AG04450 (cell line): ENCODE measurements at regions of chr6 and their contacts with region 1.

Region 1: DNA sequence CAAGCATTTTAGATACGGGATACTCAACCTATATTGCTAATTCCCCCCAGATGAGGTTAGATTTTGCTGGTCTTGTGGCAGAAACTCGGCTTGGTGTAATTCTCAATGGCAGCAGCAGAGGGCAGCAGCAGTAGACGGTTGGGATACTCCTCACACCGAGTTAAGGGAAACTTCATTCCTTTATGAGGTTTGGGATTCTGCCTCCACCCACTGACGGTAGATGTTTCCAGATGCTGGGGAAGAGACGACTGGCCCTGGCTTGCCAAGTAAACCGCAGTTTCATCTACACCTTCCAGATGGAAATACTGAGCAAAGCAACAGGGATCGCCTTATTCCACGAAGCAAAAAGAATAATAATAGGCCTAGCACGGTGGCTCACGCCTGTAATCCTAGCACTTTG is 8.2 kb upstream of the TBC1D7 start:
- DNase-seq: peak; percentile 87
- H3K4me3 ChIP-seq: no peak overlapping the region
- H3K27ac ChIP-seq: no peak overlapping the region
- H3K27me3 ChIP-seq: peaks cover 3% of the 10 kb centered on the region
- CTCF ChIP-seq: peak; percentile 91

Region 2: DNA sequence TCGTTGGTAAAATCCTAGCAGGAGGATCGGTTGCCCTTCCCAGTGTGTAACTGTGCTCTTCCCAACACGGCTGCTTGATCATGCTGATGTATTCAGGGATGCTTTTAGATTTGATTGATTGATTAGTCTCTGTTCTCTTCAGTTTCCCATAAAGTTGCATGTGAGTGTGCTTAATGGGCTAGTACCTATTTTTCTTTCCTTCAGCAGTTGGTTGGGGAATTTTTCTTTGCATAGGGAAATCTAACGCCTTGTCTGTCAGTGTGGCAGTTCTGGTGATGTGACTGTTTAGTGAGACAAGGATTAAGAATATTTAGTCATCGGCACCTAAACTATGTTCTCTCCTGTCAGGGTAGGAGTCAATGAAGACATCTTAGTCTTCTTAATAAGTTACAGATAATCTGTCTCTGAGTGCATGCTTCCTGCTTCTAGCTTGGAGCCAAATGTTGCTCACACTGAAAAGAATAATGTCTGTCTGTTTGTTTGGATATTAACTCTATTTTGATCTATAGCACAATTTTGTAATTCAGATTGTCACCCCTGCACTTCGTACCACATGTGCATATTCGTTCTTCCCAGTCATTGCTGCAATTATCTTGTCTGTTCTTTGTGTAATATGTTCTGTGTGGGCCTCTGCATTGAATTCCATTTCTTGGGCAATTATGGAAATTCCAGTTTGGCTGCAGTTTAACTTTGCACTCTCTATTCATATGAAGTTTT is 876.5 kb before region 1 on chr6:
- CTCF ChIA-PET with region 1: no interaction called
- POLR2A ChIA-PET with region 1: no interaction called
- DNase-seq: no peak
- H3K4me3 ChIP-seq: no peak overlapping the region
- H3K27ac ChIP-seq: no peak overlapping the region
- H3K27me3 ChIP-seq: peaks cover 3% of the 10 kb centered on the region
- CTCF ChIP-seq: no peak

Region 3: DNA sequence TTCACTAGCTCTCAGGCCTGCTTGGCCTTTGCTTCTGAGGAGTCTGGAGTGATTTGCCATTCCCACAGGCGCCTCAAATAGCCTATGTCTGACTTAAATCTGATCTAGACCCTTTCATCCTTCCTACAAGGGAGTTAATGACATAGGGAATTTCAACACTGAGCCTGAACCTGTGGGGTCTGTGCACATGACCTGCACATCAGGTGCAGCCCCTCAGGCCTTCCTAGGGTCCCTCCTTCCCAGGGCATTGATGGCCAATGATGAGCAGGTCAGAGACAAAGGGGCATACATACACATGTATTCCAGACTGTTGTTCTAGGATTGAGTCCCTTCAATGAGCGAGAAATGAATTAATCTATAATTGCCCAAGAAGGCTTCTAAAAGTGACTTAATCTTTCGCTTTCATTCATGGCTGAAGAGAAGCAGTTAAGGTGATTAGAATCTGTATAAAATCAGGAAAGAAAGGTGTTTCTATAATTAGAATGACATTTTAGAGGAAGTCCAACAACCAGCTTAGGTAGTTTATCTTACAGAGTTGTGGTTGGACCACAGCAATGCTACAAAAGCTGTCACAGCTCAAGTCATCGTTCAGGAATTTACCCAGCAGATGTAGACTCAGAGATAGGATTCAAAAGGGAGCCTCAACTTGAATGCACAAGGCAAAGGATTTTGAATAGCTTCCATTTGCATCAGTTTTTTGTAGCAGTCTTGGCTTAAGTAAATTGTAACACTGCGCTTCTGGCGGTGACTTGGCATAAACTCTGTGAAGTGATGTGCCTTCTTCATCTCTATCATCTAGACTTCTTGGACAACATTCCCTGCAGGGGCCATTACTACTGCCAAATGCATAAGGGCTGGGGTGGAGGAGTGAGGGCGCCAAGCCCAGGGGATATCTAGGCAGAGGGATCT is 18.7 kb after region 1 on chr6:
- CTCF ChIA-PET with region 1: interaction called, 11 read pairs
- POLR2A ChIA-PET with region 1: interaction called, 3 read pairs
- DNase-seq: peak; percentile 95
- H3K4me3 ChIP-seq: no peak overlapping the region
- H3K27ac ChIP-seq: peak overlapping the region; percentile 95
- H3K27me3 ChIP-seq: no peaks in the 10 kb centered on the region
- CTCF ChIP-seq: 0 out of 2 replicates have a peak, but pooled peaks have one; percentile 11

Region 4: DNA sequence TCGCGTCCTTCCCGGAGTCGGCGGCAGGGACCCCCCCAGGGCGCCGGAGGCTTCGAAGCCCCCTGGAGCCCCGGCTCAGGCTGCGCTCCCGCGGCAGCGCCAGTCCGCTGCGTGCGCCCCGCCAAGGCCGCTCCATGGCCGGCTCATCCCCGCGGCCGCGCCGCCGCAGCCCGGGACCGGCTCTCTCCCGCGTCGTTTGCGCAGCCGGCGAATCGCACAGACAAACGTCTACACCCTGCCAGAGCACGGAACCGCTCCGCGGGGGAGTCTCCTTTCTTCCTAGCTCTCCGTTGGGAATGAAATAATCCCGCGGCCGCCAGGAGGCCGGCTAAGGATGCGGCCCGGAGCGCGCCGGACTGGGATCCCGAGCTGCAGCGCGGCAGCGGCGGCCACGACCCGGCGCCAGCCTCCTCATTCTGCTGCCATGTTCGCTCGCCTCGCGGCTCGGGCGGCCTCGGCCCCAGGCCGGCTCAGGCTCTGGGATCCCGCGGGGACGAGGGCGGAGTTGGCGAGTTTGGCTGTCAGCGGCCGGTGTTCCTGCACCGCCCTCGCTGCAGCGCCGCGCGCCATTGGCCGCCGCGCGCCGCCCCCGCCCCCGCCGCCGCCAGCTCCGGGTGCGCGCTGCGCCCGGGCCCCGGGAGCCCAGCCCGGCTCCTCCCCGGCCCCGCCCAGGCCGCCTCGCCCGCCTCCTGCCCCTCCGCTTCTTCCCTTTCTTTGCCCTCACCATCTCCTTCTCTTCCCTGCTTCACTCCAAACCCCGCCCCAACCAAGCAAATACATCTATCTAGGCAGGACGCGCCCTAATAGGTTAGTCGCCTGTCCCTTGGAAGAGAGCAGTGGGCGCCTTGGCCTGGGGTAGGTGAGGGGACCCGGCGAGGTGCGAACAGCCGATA is 150.8 kb after region 1 on chr6 and contains the start of gene GFOD1:
- CTCF ChIA-PET with region 1: interaction called, 11 read pairs
- POLR2A ChIA-PET with region 1: no interaction called
- DNase-seq: peak; percentile 37
- H3K4me3 ChIP-seq: peak within 1 kb of the TSS; percentile 74
- H3K27ac ChIP-seq: peak within 1 kb of the TSS; percentile 31
- H3K27me3 ChIP-seq: no peaks in the 10 kb centered on the region
- CTCF ChIP-seq: peak; percentile 30; the same call in 1 of the 2 replicates
- polyA plus RNA-seq, gene GFOD1: 2.7 and 3.0 TPM in 2 replicates

Region 5: DNA sequence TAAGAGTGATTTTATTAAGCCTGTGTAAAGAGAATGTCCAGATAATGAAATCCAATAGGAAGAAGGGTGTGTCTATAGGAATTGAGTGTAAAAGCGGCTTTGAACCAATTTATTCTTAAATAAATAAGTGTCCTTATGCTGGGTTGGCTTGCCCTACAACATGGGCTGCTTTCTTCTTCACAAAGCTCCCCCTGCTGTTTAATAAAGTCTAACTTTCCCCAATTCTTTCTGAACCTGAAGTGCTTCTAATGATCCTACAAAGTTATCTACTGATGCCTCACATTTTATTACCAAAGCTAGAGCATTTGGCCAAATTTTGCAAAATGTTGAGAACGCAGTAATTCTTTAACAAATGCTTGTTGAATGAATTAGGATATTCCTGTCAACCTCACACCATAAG is 201.5 kb after region 1 on chr6:
- CTCF ChIA-PET with region 1: interaction called, 47 read pairs
- POLR2A ChIA-PET with region 1: no interaction called
- DNase-seq: peak; percentile 30
- H3K4me3 ChIP-seq: no peak overlapping the region
- H3K27ac ChIP-seq: no peak overlapping the region
- H3K27me3 ChIP-seq: peaks cover 2% of the 10 kb centered on the region
- CTCF ChIP-seq: peak; percentile 56

Region 6: DNA sequence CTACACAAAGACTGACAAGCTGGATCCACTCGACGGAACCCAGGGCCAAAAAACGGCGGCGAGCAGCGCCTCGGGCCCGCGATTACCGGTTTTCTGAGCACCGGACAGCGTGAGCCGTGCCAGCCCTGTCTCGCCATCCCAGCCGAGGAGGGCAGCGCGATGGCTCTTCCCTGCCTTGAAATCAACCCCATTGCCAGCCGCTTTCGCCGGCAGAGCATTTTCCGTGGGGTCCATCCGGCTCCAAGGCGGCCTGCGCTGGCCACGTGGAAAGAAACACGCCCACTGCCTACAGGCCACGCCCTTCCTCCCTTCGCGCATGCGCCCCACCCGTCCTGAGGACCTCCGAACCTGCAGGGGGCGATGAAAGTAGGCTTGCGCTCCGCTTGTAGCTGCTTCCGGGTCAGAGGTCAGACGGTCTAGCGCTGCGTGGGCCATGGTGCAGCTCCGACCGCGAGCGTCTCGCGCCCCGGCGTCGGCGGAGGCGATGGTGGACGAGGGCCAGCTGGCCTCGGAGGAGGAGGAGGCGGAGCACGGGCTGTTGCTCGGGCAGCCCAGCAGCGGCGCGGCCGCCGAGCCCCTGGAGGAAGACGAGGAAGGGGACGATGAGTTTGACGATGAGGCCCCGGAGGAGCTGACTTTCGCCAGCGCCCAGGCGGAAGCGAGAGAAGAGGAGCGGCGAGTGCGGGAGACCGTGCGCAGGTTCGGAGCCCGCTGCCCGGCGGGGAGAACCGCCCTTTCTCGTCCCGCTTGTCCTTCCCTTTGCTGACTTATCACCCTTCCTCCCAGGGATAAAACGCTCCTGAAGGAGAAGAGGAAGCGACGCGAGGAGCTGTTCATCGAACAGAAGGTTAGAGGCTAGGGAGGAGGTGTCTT is 278.6 kb after region 1 on chr6 and contains the start of gene NOL7:
- CTCF ChIA-PET with region 1: interaction called, 11 read pairs
- POLR2A ChIA-PET with region 1: no interaction called
- DNase-seq: peak; percentile 98
- H3K4me3 ChIP-seq: peak within 1 kb of the TSS; percentile 98
- H3K27ac ChIP-seq: peak within 1 kb of the TSS; percentile 94
- H3K27me3 ChIP-seq: no peaks in the 10 kb centered on the region
- CTCF ChIP-seq: peak; percentile 87
- polyA plus RNA-seq, gene NOL7: 31.3 and 46.6 TPM in 2 replicates

Region 7: DNA sequence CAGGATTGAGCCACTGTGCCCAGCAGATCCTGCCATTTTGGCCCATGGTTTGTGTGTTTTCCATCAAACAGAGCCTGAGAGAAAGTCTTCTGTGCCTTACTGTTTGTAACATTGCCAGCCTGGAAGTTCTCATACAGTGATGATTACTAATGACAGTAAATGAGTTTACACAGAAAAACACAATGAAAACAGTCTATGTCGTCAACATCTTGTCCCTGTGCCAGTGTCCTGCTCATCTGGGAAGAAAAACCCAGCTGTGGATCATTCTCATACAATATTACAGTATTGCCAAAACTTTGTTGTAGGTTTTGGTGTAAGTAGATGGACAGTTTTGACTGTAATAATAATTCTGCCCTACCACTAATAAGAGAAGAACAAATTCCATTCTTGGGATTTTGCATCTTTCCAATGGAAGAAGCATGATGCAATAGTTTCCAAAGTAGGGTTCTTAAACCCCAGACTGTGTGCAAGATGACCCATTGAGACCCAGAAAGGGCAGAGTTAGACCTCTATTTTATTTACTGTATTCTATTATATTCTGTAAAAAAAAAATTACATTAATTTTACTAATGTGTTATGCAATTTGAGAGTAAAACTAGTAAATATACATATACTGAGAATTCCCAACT is 1774.3 kb after region 1 on chr6:
- CTCF ChIA-PET with region 1: no interaction called
- POLR2A ChIA-PET with region 1: no interaction called
- DNase-seq: no peak
- H3K4me3 ChIP-seq: no peak overlapping the region
- H3K27ac ChIP-seq: no peak overlapping the region
- H3K27me3 ChIP-seq: no peaks in the 10 kb centered on the region
- CTCF ChIP-seq: no peak